ENCODE measurements at regions of chr7 and their contacts with region 1.

Region 1: GRCh38 chr7:140003913-140004382 is 58.8 kb downstream of the PARP12 start:
- DNase-seq: peak; percentile 49
- H3K4me3 ChIP-seq: no peak overlapping the region
- H3K27ac ChIP-seq: no peak overlapping the region
- H3K4me1 ChIP-seq: peaks cover 5% of the 10 kb centered on the region
- H3K27me3 ChIP-seq: no peaks in the 10 kb centered on the region
- CTCF ChIP-seq: peak; percentile 50 to 65

Region 2: GRCh38 chr7:139321071-139321745 is 682.7 kb before region 1 on chr7:
- CTCF ChIA-PET with region 1: no interaction called
- dilution Hi-C with region 1: no loop called
- in situ Hi-C with region 1: no loop called
- intact Hi-C with region 1: loop called (anchors 5 kb)
- DNase-seq: peak; percentile 33
- H3K4me3 ChIP-seq: no peak overlapping the region
- H3K27ac ChIP-seq: no peak overlapping the region
- H3K4me1 ChIP-seq: no peaks in the 10 kb centered on the region
- H3K27me3 ChIP-seq: no peaks in the 10 kb centered on the region
- CTCF ChIP-seq: peak; percentile 38 to 72

Region 3: DNA sequence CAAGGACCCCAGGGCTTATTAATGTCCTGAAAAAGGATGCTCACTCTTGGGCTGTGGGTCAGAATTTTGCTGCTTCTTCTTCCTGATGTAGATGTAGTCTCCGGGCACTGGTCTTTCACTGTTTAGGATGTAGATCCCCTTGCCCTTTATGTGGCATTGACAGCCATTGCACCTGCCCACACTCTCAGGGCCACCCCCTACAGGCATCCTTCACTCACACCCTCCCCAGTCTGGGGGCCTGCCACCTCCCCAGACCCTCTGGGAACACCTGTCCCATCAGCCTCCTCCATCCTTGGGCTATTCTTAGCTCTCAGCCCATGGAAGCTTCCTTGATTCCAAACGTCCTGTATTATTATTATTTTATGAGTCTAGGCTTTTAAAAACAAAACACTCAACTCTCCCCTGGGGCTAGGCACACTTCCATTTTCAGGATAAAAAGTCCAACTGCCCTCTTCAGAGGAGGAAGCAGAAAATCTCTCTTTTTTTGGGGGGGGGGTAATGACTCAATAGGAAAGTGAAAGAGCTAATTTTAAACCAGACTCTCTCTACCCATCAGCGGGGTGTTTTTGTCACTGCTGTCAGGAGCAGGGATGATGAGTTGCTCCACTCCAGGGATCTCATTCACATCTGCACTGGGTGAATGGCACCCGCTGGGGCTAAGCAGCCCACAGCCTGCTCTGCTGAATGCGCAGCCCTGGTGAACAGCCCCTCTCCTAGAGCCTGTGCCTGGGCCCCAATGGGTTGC is 508.9 kb before region 1 on chr7:
- CTCF ChIA-PET with region 1: no interaction called
- dilution Hi-C with region 1: no loop called
- in situ Hi-C with region 1: loop called (anchors 10 kb)
- intact Hi-C with region 1: loop called (anchors 1 kb)
- DNase-seq: no peak
- H3K4me3 ChIP-seq: no peak overlapping the region
- H3K27ac ChIP-seq: no peak overlapping the region
- H3K4me1 ChIP-seq: peaks cover 4% of the 10 kb centered on the region
- H3K27me3 ChIP-seq: no peaks in the 10 kb centered on the region
- CTCF ChIP-seq: no peak

Region 4: DNA sequence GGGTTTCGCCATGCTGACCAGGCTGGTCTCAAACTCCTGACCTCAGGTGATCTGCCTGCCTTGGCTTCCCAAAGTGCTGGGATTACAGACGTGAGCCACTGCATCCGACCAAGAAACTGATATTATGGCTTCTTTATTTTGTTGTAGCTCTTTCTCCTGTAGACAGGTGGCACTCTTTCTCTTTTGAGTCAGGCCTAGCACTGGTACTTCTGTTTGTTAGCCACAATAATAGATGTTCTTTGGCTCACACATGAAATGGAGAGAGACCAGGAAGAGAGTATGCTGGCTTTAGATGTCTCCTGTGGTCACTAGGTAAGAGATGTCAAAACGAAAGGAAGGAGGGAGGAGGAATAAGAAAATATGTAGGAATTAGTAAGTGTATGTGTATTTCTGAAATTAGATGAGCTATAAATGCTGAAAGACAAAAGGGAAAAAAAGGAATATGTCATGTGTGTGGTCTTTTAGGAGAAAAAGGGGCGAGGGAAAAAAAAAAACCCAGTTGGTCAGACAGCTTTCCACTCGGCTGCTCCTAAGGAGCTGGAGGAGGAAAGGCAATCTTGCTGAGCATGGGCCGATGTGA is 401.7 kb before region 1 on chr7:
- CTCF ChIA-PET with region 1: no interaction called
- dilution Hi-C with region 1: no loop called
- in situ Hi-C with region 1: no loop called
- intact Hi-C with region 1: loop called (anchors 1 kb)
- DNase-seq: peak; percentile 10
- H3K4me3 ChIP-seq: no peak overlapping the region
- H3K27ac ChIP-seq: no peak overlapping the region
- H3K4me1 ChIP-seq: no peaks in the 10 kb centered on the region
- H3K27me3 ChIP-seq: no peaks in the 10 kb centered on the region
- CTCF ChIP-seq: peak; percentile 48 to 58

Region 5: DNA sequence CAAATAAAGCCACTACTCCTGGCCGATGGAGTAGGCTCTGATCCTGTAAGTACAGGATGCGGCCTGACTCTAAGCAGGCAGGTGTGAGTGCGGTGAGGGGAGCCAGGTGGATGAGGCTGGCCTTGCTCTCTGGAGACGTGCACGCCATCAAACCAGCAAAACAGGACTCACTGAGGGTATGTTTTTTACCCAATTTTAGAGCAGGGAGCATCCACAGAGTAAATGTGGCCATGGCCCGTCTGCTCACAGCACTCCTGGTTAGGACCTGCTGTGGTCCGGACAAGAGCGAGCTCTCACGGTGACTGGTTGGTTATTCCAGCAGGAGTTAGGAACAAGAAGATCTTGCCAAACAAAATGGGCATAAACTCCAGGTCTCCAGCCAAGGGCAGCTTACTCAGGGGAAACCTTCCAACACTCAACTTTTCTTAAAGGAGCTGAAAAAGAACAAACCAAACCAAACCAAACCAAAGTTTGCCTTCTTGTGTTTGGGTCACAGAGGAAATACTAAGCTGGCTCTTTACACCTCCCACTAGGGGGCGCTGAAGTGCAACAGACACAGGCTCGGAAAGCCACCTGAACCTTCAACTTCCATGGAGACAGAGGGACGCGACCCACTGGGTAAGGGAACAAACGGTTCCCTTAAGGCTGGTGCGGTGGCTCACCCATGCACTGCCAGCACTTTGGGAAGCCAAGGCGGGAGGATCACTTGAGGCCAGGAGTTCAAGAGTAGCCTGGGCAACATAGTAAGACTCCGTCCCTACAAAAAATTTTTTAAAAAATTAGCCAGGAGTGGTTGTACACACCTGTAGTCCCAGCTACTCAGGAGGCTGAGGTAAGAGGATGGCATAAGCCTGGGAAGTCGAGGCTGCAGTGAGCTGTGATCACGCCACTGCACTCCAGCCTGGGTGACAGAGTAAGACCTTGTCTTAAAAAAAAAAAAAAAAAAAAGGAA is 358.1 kb before region 1 on chr7:
- CTCF ChIA-PET with region 1: interaction called, 3 read pairs
- dilution Hi-C with region 1: no loop called
- in situ Hi-C with region 1: loop called (anchors 5 to 10 kb)
- intact Hi-C with region 1: loop called (anchors 1 kb)
- DNase-seq: peak; percentile 57
- H3K4me3 ChIP-seq: no peak overlapping the region
- H3K27ac ChIP-seq: no peak overlapping the region
- H3K4me1 ChIP-seq: peaks cover 5% of the 10 kb centered on the region
- H3K27me3 ChIP-seq: no peaks in the 10 kb centered on the region
- CTCF ChIP-seq: peak; percentile 85 to 94

Region 6: GRCh38 chr7:139825666-139826290 is 178.2 kb before region 1 on chr7:
- CTCF ChIA-PET with region 1: no interaction called
- dilution Hi-C with region 1: no loop called
- in situ Hi-C with region 1: no loop called
- intact Hi-C with region 1: loop called (anchors 2 kb)
- DNase-seq: peak; percentile 49
- H3K4me3 ChIP-seq: no peak overlapping the region
- H3K27ac ChIP-seq: no peak overlapping the region
- H3K4me1 ChIP-seq: peaks cover 8% of the 10 kb centered on the region
- H3K27me3 ChIP-seq: no peaks in the 10 kb centered on the region
- CTCF ChIP-seq: no peak

Region 7: GRCh38 chr7:140326116-140326928 is 322.4 kb after region 1 on chr7:
- CTCF ChIA-PET with region 1: no interaction called
- dilution Hi-C with region 1: no loop called
- in situ Hi-C with region 1: no loop called
- intact Hi-C with region 1: loop called (anchors 1 kb)
- DNase-seq: peak; percentile 46
- H3K4me3 ChIP-seq: no peak overlapping the region
- H3K27ac ChIP-seq: no peak overlapping the region
- H3K4me1 ChIP-seq: no peaks in the 10 kb centered on the region
- H3K27me3 ChIP-seq: no peaks in the 10 kb centered on the region
- CTCF ChIP-seq: peak; percentile 58 to 89